ENCODE measurements at regions of chr5 and their contacts with region 1.

Region 1: GRCh38 chr5:97167435-97167834 is 15.6 kb downstream of the RIOK2 start:
- DNase-seq: no peak
- H3K4me3 Mint-ChIP-seq: peak overlapping the region; percentile 51
- H3K27ac Mint-ChIP-seq: peak overlapping the region; percentile 79
- H3K4me1 Mint-ChIP-seq: peaks cover 31% of the 10 kb centered on the region
- H3K27me3 Mint-ChIP-seq: no peaks in the 10 kb centered on the region

Region 2: DNA sequence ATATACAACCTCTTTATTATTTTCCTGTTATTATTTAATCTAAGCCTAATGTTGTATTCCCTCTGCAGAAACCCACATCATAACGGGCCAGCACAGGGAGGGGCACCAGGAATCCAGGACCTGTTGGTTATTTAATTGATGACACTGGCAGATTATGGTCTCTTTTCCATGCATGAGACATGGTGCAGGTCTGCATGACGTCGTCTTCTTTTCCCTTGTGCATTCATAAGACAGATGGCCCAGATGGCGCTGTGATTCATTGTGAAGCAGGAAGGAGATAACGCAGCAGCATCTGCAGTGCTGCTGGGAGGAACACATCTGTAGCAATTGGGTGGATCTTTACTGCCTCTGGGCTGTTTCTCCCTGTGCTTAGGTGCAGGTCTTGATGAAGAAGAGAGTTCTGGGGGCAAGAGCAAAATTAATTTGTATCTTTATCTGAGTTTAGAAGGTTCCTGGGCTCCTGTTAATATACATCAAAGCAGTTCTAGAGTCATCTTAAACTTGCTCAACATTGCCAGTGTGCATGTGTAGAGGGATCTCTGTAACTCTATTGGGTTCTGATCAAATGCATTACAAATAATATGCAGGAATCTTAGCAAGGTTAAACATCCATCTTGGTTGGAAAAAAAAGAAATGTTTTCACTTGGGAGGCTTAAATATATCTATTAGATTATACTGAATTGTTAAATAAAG is 910.5 kb before region 1 on chr5:
- CTCF ChIA-PET with region 1: no interaction called
- POLR2A ChIA-PET with region 1: no interaction called
- intact Hi-C with region 1: no loop called
- DNase-seq: peak; percentile 23
- H3K4me3 Mint-ChIP-seq: no peak overlapping the region
- H3K27ac Mint-ChIP-seq: no peak overlapping the region
- H3K4me1 Mint-ChIP-seq: peaks cover 11% of the 10 kb centered on the region
- H3K27me3 Mint-ChIP-seq: peaks cover 8% of the 10 kb centered on the region

Region 3: GRCh38 chr5:97183100-97183929 is 15.9 kb after region 1 on chr5 and contains the start of gene RIOK2:
- CTCF ChIA-PET with region 1: interaction called, 4 read pairs
- POLR2A ChIA-PET with region 1: no interaction called
- intact Hi-C with region 1: loop called (anchors 1 kb)
- DNase-seq: peak; percentile 96
- H3K4me3 Mint-ChIP-seq: peak within 1 kb of the TSS; percentile 87
- H3K27ac Mint-ChIP-seq: peak within 1 kb of the TSS; percentile 98
- H3K4me1 Mint-ChIP-seq: peaks cover 34% of the 10 kb centered on the region
- H3K27me3 Mint-ChIP-seq: no peaks in the 10 kb centered on the region
- total RNA-seq, gene RIOK2: 31.8 to 41.5 TPM

Measured in activated CD4-positive, alpha-beta memory T cell treated with anti-CD3 and anti-CD28 coated beads for 36 hours (primary cell).